Endothelial cell of umbilical vein (primary cell): ENCODE measurements at regions of chr10 and their contacts with region 1.

Region 1: GRCh38 chr10:11611248-11612020 is at the start of gene USP6NL:
- DNase-seq: peak; percentile 88
- H3K4me3 ChIP-seq: peak within 1 kb of the TSS; percentile 52 to 93 (median 70)
- H3K27ac ChIP-seq: peak within 1 kb of the TSS; percentile 54
- H3K4me1 ChIP-seq: peaks cover 32% of the 10 kb centered on the region
- H3K27me3 ChIP-seq: no peaks in the 10 kb centered on the region
- CTCF ChIP-seq: no peak
- POLR2A ChIP-seq: peak; percentile 64
- total RNA-seq, gene USP6NL: 26.9 and 29.2 TPM in 2 replicates

Region 2: GRCh38 chr10:11515596-11516430 is 95.6 kb before region 1 on chr10:
- CTCF ChIA-PET with region 1: interaction called, 3 read pairs
- POLR2A ChIA-PET with region 1: no interaction called
- dilution Hi-C with region 1: no loop called
- intact Hi-C with region 1: loop called (anchors 2 kb)
- DNase-seq: peak; percentile 70
- H3K4me3 ChIP-seq: no peak overlapping the region
- H3K27ac ChIP-seq: no peak overlapping the region
- H3K4me1 ChIP-seq: peaks cover 10% of the 10 kb centered on the region
- H3K27me3 ChIP-seq: no peaks in the 10 kb centered on the region
- CTCF ChIP-seq: peak; percentile 63 to 73
- POLR2A ChIP-seq: no peak

Region 3: GRCh38 chr10:11551916-11552602 is 59.4 kb before region 1 on chr10:
- CTCF ChIA-PET with region 1: interaction called, 5 read pairs
- POLR2A ChIA-PET with region 1: interaction called, 4 read pairs
- dilution Hi-C with region 1: no loop called
- intact Hi-C with region 1: loop called (anchors 2 kb)
- DNase-seq: peak; percentile 94
- H3K4me3 ChIP-seq: peak overlapping the region in 1 of 3 experiments; percentile 8
- H3K27ac ChIP-seq: peak overlapping the region; percentile 59
- H3K4me1 ChIP-seq: peaks cover 26% of the 10 kb centered on the region
- H3K27me3 ChIP-seq: no peaks in the 10 kb centered on the region
- CTCF ChIP-seq: no peak
- POLR2A ChIP-seq: no peak

Region 4: GRCh38 chr10:11647676-11648075 is 36.2 kb after region 1 on chr10:
- CTCF ChIA-PET with region 1: interaction called, 4 read pairs
- POLR2A ChIA-PET with region 1: no interaction called
- dilution Hi-C with region 1: no loop called
- intact Hi-C with region 1: loop called (anchors 2 kb)
- DNase-seq: peak; percentile 86
- H3K4me3 ChIP-seq: no peak overlapping the region
- H3K27ac ChIP-seq: peak overlapping the region; percentile 25
- H3K4me1 ChIP-seq: peaks cover 25% of the 10 kb centered on the region
- H3K27me3 ChIP-seq: no peaks in the 10 kb centered on the region
- CTCF ChIP-seq: no peak
- POLR2A ChIP-seq: no peak

Region 5: DNA sequence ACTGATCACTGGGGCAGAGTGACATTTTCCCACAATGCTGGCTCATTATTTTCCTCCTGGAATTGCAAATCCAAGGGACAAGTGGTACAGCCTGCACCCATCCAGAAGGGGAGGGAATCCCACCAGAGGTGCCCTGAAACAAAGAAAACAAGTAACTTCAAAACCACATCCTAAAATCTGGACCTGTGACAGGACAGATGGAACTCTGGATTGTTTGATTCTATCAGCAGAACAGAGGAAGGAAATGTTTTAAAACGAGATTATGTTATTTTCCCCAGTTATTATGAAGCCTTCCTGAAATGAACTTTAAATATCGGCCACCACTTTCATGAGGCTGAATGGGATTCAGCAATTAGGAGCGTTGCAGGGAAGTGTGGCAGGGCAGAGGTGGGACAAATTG is 68.5 kb after region 1 on chr10:
- CTCF ChIA-PET with region 1: interaction called, 3 read pairs
- POLR2A ChIA-PET with region 1: no interaction called
- dilution Hi-C with region 1: no loop called
- intact Hi-C with region 1: loop called (anchors 1 kb)
- DNase-seq: peak; percentile 83
- H3K4me3 ChIP-seq: peak overlapping the region in 1 of 3 experiments; percentile 40
- H3K27ac ChIP-seq: peak overlapping the region; percentile 32
- H3K4me1 ChIP-seq: peaks cover 30% of the 10 kb centered on the region
- H3K27me3 ChIP-seq: no peaks in the 10 kb centered on the region
- CTCF ChIP-seq: no peak
- POLR2A ChIP-seq: no peak

Region 6: GRCh38 chr10:11684717-11685645 is 73.5 kb after region 1 on chr10:
- CTCF ChIA-PET with region 1: interaction called, 3 read pairs
- POLR2A ChIA-PET with region 1: no interaction called
- dilution Hi-C with region 1: no loop called
- intact Hi-C with region 1: loop called (anchors 1 kb)
- DNase-seq: peak; percentile 89
- H3K4me3 ChIP-seq: peak overlapping the region in 2 of 3 experiments; percentile 6 to 47
- H3K27ac ChIP-seq: peak overlapping the region; percentile 98
- H3K4me1 ChIP-seq: peaks cover 35% of the 10 kb centered on the region
- H3K27me3 ChIP-seq: no peaks in the 10 kb centered on the region
- CTCF ChIP-seq: no peak
- POLR2A ChIP-seq: no peak

Region 7: DNA sequence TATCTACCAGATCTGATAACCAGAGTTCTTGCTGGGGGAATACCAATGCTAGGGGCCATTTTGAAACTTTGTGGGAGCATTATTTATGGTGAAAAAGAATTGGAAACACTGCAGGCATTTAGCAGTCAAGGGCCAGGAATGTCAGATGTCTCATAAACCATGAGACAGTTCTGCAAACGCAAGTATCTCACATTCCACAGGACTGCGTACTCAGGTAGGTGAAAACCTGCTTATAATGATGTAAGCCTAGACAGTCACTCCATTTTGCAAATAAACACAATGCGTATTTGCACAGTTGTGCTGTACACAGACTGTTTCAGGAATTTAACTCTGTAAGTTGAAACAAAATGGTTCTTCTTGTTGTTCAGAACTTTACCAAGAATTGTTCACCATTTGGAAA is 164.7 kb after region 1 on chr10:
- CTCF ChIA-PET with region 1: no interaction called
- POLR2A ChIA-PET with region 1: no interaction called
- dilution Hi-C with region 1: no loop called
- intact Hi-C with region 1: no loop called
- DNase-seq: no peak
- H3K4me3 ChIP-seq: no peak overlapping the region
- H3K27ac ChIP-seq: no peak overlapping the region
- H3K4me1 ChIP-seq: no peaks in the 10 kb centered on the region
- H3K27me3 ChIP-seq: peaks cover 2% of the 10 kb centered on the region in 2 experiments
- CTCF ChIP-seq: no peak
- POLR2A ChIP-seq: no peak